ENCODE measurements at regions of chr15 and their contacts with region 1.

Region 1: GRCh38 chr15:40323239-40323952 is at the start of gene INAFM2:
- DNase-seq: peak; percentile 96
- H3K4me3 ChIP-seq: peak within 1 kb of the TSS; percentile 79 to 96 (median 90)
- H3K27ac ChIP-seq: peak within 1 kb of the TSS; percentile 90 to 99 (median 99)
- H3K4me1 ChIP-seq: peaks cover 0 to 66% (median 55%) of the 10 kb centered on the region in 4 donors
- H3K27me3 ChIP-seq: no peaks in the 10 kb centered on the region
- CTCF ChIP-seq: peak in 3 of 4 experiments; percentile 59 to 64 (median 61)
- EP300 ChIP-seq: peak in 2 of 4 donors; percentile 7 to 45
- POLR2A ChIP-seq: peak in 1 of 2 donors; percentile 60
- total RNA-seq, gene INAFM2: 41.0 to 63.1 (median 51.8) TPM

Region 2: DNA sequence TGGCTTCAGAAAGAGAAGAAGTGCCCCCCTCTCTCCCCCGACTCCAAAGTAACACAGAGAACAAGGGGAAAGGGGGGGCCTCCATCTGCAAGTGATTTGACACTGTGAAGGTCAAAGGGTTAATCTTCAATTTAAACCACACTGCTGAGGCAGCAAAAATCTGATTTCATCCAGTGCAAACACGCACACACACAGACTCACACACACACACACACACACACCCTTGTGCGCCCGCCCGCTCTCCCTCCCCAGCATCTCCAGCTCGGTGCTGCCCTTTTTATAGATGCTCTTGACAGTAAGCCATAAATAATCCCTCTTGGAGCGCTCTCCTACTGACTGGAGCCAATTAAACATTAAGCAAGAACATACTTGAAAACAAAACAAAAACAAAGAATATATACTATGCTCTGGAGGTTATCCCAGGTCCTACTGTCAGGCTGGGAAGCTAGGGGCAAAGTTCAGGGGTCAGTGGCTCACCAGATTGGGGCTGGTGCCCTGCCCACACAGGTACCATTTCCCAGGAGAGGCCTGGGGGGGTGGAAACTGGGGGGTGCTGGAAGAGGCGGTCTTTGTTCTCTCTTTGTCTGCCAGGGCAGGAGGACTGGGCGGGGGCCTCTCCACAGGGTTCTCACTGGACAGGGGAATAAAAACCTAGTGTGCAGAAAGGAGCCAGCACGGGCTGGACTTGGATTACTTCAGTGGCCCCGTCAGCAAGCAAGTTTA is 231.0 kb before region 1 on chr15:
- intact Hi-C with region 1: loop called (anchors 5 kb)
- DNase-seq: peak; percentile 97
- H3K4me3 ChIP-seq: peak overlapping the region in 1 of 4 donors; percentile 13
- H3K27ac ChIP-seq: peak overlapping the region; percentile 79 to 98 (median 95)
- H3K4me1 ChIP-seq: peaks cover 0 to 99% (median 95%) of the 10 kb centered on the region in 4 donors
- H3K27me3 ChIP-seq: no peaks in the 10 kb centered on the region
- CTCF ChIP-seq: no peak
- EP300 ChIP-seq: peak in 3 of 4 donors; percentile 60 to 82 (median 75)
- POLR2A ChIP-seq: no peak

Region 3: DNA sequence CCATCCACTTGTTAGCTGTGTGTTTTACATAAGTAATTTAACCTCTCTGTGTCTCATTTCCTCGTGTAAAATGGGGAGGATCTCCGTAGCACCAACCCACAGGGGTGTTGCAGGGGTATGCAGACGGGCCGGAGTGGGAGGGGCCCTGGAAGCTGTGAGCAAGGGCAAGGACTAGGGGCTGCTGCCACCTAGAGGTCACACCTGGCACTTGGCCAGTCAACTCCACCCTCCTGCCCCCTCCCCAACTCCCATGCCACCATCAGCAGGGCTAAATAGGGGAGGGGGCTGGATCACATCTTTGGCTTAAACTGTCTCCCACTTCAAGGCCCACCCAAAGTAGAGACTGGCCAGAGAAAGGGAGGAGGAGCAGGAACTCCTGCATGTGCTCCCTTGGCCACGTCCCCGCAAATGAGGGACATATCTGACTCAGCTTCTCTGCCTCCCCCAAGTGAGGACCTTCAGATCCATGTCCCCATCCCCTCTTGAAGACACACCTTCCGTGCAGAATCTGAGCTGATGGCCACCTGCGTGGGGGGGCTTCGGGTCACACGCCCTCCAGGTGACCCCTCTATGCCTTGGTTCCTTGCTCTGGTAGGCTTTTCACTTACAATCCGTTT is 14.8 kb after region 1 on chr15:
- intact Hi-C with region 1: loop called (anchors 1 kb)
- DNase-seq: peak; percentile 94
- H3K4me3 ChIP-seq: peak overlapping the region in 3 of 4 donors; percentile 59 to 66 (median 64)
- H3K27ac ChIP-seq: peak overlapping the region; percentile 97 to 99 (median 99)
- H3K4me1 ChIP-seq: peaks cover 0 to 100% (median 99%) of the 10 kb centered on the region in 4 donors
- H3K27me3 ChIP-seq: no peaks in the 10 kb centered on the region
- CTCF ChIP-seq: peak in 3 of 4 experiments; percentile 49 to 62 (median 53)
- EP300 ChIP-seq: no peak
- POLR2A ChIP-seq: no peak

Region 4: DNA sequence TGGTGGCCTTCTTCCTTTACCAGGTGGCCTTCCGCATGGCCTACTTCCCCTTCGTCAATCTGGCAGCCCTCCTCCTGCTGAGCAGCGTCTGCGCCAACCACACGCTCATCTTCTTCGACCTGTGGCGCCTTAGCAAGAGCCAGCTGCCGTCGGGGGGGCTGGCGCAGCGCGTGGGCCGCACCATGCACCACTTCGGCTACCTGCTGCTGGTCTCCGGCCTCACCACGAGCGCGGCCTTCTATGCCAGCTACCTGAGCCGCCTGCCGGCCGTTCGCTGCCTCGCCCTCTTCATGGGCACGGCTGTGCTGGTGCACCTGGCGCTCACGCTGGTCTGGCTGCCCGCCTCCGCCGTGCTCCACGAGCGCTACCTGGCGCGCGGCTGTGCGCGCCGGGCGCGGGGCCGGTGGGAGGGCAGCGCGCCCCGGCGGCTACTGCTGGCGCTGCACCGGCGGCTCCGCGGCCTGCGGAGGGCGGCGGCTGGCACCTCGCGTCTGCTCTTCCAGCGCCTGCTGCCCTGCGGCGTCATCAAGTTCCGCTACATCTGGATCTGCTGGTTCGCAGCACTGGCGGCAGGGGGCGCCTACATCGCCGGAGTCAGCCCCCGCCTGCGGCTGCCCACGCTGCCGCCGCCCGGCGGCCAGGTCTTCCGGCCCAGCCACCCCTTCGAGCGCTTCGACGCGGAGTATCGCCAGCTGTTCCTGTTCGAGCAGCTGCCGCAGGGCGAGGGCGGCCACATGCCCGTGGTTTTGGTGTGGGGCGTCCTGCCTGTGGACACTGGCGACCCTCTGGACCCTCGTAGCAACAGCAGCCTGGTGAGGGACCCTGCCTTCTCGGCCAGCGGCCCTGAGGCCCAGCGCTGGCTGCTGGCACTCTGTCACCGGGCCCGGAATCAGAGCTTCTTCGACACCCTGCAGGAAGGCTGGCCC is 44.6 kb after region 1 on chr15:
- intact Hi-C with region 1: loop called (anchors 2 kb)
- DNase-seq: peak; percentile 92
- H3K4me3 ChIP-seq: peak overlapping the region in 3 of 4 donors; percentile 34 to 48 (median 41)
- H3K27ac ChIP-seq: peak overlapping the region; percentile 25 to 82 (median 74)
- H3K4me1 ChIP-seq: peaks cover 0 to 23% (median 21%) of the 10 kb centered on the region in 4 donors
- H3K27me3 ChIP-seq: no peaks in the 10 kb centered on the region
- CTCF ChIP-seq: peak; percentile 70 to 80 (median 76)
- EP300 ChIP-seq: no peak
- POLR2A ChIP-seq: no peak

Region 5: DNA sequence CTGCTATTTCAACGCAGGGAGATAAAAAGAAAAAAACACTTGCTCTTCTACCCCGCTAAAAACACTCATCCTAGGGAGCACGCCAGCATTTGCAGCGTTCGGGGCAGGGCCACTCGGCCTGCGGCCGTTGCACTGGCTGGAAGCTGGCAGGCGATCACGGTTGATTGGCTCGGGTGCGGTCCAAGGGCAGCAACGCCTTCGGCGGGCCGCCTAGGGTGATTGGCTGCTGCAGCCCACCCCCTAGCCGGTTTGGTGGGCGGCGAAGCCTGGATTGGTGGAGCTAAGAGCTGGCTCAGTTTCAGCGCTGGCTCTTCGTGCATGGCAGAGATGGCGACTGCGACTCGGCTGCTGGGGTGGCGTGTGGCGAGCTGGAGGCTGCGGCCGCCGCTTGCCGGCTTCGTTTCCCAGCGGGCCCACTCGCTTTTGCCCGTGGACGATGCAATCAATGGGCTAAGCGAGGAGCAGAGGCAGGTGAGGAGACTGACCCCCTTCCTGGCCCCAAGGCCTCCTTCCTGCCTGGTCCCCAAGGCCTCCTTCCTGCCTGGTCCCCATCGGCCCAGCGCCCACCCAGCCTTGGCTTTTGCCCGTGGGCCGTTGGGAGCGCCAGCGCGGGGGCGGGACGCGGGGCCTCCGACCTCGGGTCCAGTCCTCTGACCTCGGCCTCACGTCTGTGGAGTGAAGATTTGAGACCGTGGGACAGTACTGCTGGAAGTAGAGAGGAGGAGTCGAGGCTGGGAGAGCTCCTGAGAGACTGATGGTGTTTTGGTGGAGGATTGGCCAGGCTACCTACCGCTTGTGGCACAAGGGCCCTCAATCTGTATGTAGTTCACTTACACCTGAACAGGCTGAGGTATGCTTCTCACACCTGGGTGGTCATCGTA is 82.3 kb after region 1 on chr15 and contains the start of gene IVD:
- intact Hi-C with region 1: loop called (anchors 5 kb)
- DNase-seq: peak; percentile 98
- H3K4me3 ChIP-seq: peak within 1 kb of the TSS; percentile 67 to 92 (median 86)
- H3K27ac ChIP-seq: peak within 1 kb of the TSS; percentile 77 to 83 (median 80)
- H3K4me1 ChIP-seq: peaks cover 0 to 31% (median 22%) of the 10 kb centered on the region in 4 donors
- H3K27me3 ChIP-seq: no peaks in the 10 kb centered on the region
- CTCF ChIP-seq: no peak
- EP300 ChIP-seq: no peak
- POLR2A ChIP-seq: peak; percentile 23 to 59
- total RNA-seq, gene IVD: 33.2 to 59.9 (median 55.4) TPM

Region 6: DNA sequence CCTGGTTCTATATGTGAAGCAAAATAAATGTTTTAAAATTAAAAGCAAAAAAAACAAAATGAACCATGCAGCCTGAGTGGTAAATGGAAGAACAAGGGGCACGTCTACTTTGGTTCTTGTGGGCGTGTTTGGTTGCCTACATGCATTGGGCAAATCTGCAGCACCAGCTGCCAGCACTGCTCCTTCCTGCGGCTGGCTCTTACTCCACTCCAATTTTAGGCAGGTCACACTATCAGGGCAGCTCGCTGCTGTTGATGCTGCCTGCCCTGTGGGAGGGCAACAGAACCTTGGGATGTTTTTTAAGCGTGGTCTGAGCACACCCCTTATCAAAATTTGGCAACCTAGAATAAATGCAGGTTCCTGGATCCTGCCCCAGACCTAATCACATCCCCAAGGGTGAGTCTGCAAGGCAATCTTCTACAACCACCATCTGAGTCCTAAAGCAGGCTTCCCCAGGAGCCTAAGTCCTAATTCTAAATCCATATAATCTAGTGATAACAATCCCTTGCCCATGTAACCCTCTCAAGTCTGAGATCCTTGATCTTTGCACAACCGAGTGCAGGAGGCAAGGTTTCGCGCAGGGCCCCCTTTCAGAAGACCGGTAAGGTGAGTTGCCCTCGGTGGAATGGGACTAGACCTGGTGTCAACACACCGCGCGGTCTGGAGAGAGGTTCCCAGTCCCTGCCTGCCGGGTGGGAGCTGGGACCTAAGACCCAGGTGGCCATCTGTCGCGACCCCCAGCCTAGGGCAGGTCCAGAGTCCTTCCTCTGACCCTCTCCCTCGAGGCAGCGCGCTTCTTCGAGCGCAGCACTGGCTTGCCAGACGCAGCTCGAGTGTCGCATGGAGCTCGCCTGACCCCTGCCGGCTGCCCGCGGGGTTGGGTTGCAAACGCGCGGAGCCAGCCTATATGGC is 98.1 kb after region 1 on chr15:
- intact Hi-C with region 1: loop called (anchors 2 kb)
- DNase-seq: peak; percentile 85
- H3K4me3 ChIP-seq: no peak overlapping the region
- H3K27ac ChIP-seq: no peak overlapping the region
- H3K4me1 ChIP-seq: peaks cover 0 to 17% (median 10%) of the 10 kb centered on the region in 4 donors
- H3K27me3 ChIP-seq: no peaks in the 10 kb centered on the region
- CTCF ChIP-seq: peak; percentile 91 to 94 (median 92)
- EP300 ChIP-seq: no peak
- POLR2A ChIP-seq: no peak